BJ (cell line): ENCODE measurements at regions of chr4 and their contacts with region 1.

Region 1: GRCh38 chr4:137861682-137862081 is 329.4 kb upstream of the PCDH18 start:
- DNase-seq: no peak
- H3K4me3 ChIP-seq: no peak overlapping the region
- H3K27me3 ChIP-seq: no peaks in the 10 kb centered on the region
- CTCF ChIP-seq: peak; percentile 36; the same call in 1 of the 2 replicates

Region 2: GRCh38 chr4:137116144-137116543 is 745.5 kb before region 1 on chr4:
- CTCF ChIA-PET with region 1: no interaction called
- POLR2A ChIA-PET with region 1: no interaction called
- DNase-seq: no peak
- H3K4me3 ChIP-seq: no peak overlapping the region
- H3K27me3 ChIP-seq: no peaks in the 10 kb centered on the region
- CTCF ChIP-seq: no peak

Region 3: GRCh38 chr4:137794764-137795254 is 66.9 kb before region 1 on chr4:
- CTCF ChIA-PET with region 1: no interaction called
- POLR2A ChIA-PET with region 1: no interaction called
- DNase-seq: no peak
- H3K4me3 ChIP-seq: no peak overlapping the region
- H3K27me3 ChIP-seq: no peaks in the 10 kb centered on the region
- CTCF ChIP-seq: no peak

Region 4: DNA sequence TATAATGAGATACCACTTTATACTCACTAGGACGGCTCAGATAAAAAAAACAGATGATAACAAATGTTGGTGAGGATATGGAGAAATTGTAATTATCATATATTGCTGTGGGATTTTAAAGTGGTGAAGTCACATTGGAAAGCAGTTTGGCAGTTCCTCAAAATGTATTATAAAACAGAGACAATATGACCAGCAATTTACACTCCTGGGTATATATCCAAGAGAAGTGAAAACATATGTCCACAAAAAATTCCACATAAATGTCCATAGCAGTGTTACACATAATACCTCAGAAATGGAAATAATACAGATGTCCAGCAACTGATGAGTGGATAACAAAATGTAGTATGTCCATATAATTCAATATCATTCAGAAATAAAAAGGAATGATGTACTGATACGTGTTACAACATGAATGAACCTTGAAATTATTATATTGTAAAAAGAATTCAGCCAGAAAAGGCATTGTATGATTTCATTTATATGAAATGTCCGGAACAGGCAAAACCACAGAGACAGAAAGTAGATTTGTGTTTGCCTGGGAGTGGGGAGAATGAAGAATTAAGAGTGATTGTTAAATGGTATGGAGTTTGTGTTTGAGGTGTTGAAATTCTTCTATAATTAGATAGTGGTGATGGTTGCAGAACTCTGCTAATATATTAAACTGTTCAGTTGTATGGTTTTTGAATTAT is 159.6 kb after region 1 on chr4:
- CTCF ChIA-PET with region 1: no interaction called
- POLR2A ChIA-PET with region 1: no interaction called
- DNase-seq: no peak
- H3K4me3 ChIP-seq: no peak overlapping the region
- H3K27me3 ChIP-seq: no peaks in the 10 kb centered on the region
- CTCF ChIP-seq: no peak

Region 5: DNA sequence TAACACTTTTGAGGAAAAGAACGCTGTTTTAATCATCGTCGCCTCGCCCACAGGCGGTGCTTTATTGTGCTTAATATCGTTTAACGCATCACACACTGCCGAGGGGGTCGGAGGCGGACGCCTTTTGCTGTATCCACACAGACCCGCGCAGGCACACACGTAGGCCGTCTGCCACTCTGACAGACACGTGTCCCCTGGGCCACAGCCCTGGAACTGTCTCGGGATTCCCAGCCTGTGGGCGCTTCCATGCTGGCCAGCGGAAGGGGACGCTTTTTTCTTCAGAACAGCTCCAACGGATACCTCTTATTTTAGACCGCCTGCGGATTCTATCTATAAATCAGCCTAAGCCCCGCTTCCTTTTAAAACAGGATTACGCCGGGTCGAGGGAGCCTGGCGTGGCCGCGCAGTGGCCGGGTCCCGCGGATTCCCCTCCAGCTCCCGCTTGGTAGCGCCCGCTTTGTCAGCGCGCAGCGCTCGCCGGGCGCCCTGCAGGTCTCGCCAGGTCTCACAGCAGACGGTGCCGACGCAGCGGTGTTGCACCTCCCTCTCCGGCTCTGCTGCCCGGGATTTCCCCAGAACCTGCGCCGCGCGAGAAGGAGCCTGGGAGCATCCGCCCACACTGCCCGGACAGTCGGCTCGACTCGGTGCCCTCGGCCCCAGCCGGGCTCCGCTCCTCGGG is 1153.7 kb after region 1 on chr4 and contains the start of gene NOCT:
- CTCF ChIA-PET with region 1: no interaction called
- POLR2A ChIA-PET with region 1: interaction called, 16 read pairs
- DNase-seq: no peak
- H3K4me3 ChIP-seq: peak within 1 kb of the TSS; percentile 59
- H3K27me3 ChIP-seq: no peaks in the 10 kb centered on the region
- CTCF ChIP-seq: no peak
- polyA plus RNA-seq, gene NOCT: 4.4 and 5.6 TPM in 2 replicates